ENCODE measurements at regions of chr17 and their contacts with region 1.

Region 1: DNA sequence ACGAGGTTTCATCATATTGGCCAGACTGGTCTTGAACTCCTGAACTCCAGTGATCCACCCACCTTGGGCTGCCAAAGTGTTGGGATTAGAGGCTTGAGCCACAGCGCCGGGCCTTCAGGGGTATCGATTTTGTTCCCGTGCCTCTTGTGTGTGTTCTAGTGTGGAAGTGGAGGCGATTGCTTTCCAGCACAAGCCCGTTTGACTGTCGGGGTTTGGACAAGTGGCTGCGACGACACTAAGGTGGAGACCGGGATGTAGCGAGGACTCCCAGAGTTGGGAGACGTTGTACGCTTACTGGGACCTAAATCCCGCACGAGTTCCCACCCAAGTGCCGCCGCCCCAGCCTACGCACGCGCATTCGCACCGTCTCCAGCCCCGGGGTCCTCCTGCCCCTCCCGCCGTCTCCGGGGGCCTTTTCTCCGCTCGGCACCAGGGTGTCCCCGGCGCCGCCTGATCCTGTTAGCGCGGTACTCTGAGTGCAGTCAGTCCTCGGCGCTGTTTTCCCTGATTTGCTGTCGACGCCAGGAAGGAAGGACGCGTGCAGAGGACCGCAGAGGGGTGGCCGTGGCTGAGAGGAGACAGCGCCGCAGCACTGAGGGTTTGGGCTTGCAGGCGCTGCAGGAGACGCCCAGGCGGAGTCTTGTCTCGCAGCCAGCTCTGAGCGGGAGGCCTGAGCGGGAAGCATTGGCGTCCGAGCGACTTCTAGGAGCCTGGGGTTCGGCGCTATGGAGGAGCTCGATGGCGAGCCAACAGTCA is at the start of gene NUP85:
- DNase-seq: peak; percentile 91
- H3K4me3 Mint-ChIP-seq: peak within 1 kb of the TSS; percentile 86
- H3K27ac Mint-ChIP-seq: peak within 1 kb of the TSS; percentile 97
- H3K4me1 Mint-ChIP-seq: peaks cover 36% of the 10 kb centered on the region
- H3K27me3 Mint-ChIP-seq: no peaks in the 10 kb centered on the region
- total RNA-seq, gene NUP85: 109 to 116 TPM

Region 2: DNA sequence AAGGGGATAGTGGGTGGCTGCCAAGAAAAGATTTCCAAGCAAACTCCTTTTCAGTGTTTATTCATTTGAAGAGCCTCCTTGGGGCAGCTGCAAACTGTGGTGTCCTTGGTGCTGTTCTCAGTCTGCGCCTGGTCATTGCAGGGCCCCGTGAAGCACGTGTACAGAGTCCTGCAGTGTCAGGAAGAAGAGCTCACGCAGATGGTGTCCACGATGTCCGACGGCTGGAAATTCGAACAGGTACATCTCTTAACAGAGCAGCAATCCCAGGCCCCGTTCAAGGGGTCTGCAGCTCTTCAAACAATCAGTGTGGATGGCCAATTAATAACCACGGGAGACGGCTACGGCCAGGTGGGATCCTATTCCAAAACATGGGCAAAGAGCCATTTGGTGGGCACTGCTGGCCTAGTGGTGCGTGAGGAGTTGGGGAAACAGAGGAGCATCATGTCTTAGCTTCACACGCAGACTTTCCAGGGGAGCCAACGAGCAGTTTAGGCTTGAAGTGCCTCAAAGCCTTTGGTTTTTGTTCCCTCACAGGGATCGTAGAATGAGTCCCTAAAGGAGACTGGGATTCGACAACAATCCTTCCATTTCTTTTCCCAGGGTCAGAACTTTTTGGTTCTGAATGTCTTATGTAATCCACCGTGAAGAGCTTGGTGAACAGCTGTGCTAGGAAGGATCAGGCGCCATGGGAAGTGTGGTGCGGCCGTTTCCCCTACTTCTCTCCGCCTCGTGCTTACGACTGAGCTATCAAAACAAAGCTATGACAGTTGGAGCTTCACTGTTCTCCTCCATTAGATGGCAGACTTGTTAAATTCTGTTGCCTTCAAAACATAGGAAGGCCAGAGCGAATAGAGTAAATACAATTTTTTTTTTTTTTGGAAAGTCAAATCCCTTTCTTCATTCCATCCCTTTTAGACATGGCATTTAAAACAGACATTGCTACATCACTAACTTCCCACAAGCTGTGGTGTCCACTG is 145.6 kb before region 1 on chr17:
- CTCF ChIA-PET with region 1: interaction called, 16 read pairs
- POLR2A ChIA-PET with region 1: no interaction called
- DNase-seq: no peak
- H3K4me3 Mint-ChIP-seq: no peak overlapping the region
- H3K27ac Mint-ChIP-seq: no peak overlapping the region
- H3K4me1 Mint-ChIP-seq: peaks cover 13% of the 10 kb centered on the region
- H3K27me3 Mint-ChIP-seq: no peaks in the 10 kb centered on the region

Region 3: GRCh38 chr17:75131280-75132017 is 73.8 kb before region 1 on chr17 and contains the start of gene NT5C:
- CTCF ChIA-PET with region 1: interaction called, 13 read pairs
- POLR2A ChIA-PET with region 1: interaction called, 3 read pairs
- DNase-seq: peak; percentile 75
- H3K4me3 Mint-ChIP-seq: peak within 1 kb of the TSS; percentile 86
- H3K27ac Mint-ChIP-seq: peak within 1 kb of the TSS; percentile 85
- H3K4me1 Mint-ChIP-seq: peaks cover 41% of the 10 kb centered on the region
- H3K27me3 Mint-ChIP-seq: no peaks in the 10 kb centered on the region
- total RNA-seq, gene NT5C: 68.2 to 69.4 TPM

Region 4: GRCh38 chr17:75182569-75183450 is 22.4 kb before region 1 on chr17 and contains the start of gene SUMO2:
- CTCF ChIA-PET with region 1: interaction called, 80 read pairs
- POLR2A ChIA-PET with region 1: interaction called, 23 read pairs
- DNase-seq: peak; percentile 96
- H3K4me3 Mint-ChIP-seq: peak within 1 kb of the TSS; percentile 82
- H3K27ac Mint-ChIP-seq: peak within 1 kb of the TSS; percentile 99
- H3K4me1 Mint-ChIP-seq: peaks cover 45% of the 10 kb centered on the region
- H3K27me3 Mint-ChIP-seq: no peaks in the 10 kb centered on the region
- total RNA-seq, gene SUMO2: 548 to 559 TPM

Region 5: GRCh38 chr17:75271233-75271954 is 66.2 kb after region 1 on chr17:
- CTCF ChIA-PET with region 1: interaction called, 5 read pairs
- POLR2A ChIA-PET with region 1: interaction called, 15 read pairs
- DNase-seq: peak; percentile 92
- H3K4me3 Mint-ChIP-seq: peak overlapping the region; percentile 85
- H3K27ac Mint-ChIP-seq: peak overlapping the region; percentile 89
- H3K4me1 Mint-ChIP-seq: peaks cover 47% of the 10 kb centered on the region
- H3K27me3 Mint-ChIP-seq: no peaks in the 10 kb centered on the region